ENCODE measurements at regions of chr1 and their contacts with region 1.

Region 1: GRCh38 chr1:95233737-95234500 is at the start of gene RWDD3:
- DNase-seq: peak; percentile 53
- ATAC-seq: peak; percentile 98
- H3K4me3 ChIP-seq: peak within 1 kb of the TSS; percentile 79
- H3K27ac ChIP-seq: peak within 1 kb of the TSS; percentile 63
- H3K4me1 ChIP-seq: peaks cover 4% of the 10 kb centered on the region; the same call in 1 of the 2 replicates
- H3K27me3 ChIP-seq: peaks cover 0 to 3% of the 10 kb centered on the region in 2 experiments; a peak in 2 of 4 replicates
- CTCF ChIP-seq: peak; percentile 65 to 90 (median 72); a peak in 5 of 6 replicates
- EP300 ChIP-seq: no peak
- POLR2A ChIP-seq: peak; percentile 96
- RAD21 ChIP-seq: peak; percentile 88
- polyA plus RNA-seq, gene RWDD3: 41.1 to 42.9 TPM

Region 2: DNA sequence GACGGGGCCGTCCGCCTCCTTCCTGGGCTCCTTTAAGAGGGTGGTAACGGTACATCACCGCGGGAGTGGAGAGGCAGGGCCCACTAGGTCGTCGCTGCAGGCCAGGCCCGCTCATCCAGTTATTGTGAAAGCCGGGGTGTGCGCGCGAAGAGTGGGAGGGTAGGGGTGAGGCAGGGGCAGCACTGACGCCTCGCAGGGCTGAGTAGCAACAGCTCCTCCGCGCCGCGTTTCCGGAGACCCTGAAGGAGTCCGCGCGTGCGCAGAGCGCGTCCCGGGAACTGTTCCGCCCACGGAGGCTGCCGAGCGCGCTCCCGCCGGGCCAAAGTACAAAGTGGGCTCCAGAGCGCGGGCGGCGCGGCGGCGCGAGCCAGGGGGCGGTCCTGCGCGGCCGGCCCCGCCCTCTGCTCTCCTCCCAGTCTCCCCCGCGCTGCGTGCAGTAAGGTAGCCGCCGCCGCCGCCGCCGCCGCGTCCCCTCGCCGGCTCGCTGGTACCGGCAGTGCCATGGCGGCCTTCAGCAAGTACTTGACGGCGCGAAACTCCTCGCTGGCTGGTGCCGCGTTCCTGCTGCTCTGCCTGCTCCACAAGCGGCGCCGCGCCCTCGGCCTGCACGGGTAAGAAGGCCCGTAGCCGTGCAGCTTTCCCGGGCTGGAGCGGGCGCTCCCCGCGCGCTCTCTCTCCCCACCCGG is 815.8 kb before region 1 on chr1 and contains the start of gene ABCD3:
- CTCF ChIA-PET with region 1: no interaction called
- POLR2A ChIA-PET with region 1: no interaction called
- RAD21 ChIA-PET with region 1: no interaction called
- SMC1A ChIA-PET with region 1: no interaction called
- in situ Hi-C with region 1: no loop called
- intact Hi-C with region 1: loop called (anchors 10 kb)
- DNase-seq: peak; percentile 80
- ATAC-seq: peak; percentile 96
- H3K4me3 ChIP-seq: peak within 1 kb of the TSS; percentile 78
- H3K27ac ChIP-seq: peak within 1 kb of the TSS; percentile 43
- H3K4me1 ChIP-seq: no peaks in the 10 kb centered on the region
- H3K27me3 ChIP-seq: no peaks in the 10 kb centered on the region
- CTCF ChIP-seq: no peak
- EP300 ChIP-seq: 0 out of 4 replicates have a peak, but pooled peaks have one; percentile 9 to 11
- POLR2A ChIP-seq: peak; percentile 94
- RAD21 ChIP-seq: no peak
- polyA plus RNA-seq, gene ABCD3: 15.1 to 16.3 TPM

Region 3: DNA sequence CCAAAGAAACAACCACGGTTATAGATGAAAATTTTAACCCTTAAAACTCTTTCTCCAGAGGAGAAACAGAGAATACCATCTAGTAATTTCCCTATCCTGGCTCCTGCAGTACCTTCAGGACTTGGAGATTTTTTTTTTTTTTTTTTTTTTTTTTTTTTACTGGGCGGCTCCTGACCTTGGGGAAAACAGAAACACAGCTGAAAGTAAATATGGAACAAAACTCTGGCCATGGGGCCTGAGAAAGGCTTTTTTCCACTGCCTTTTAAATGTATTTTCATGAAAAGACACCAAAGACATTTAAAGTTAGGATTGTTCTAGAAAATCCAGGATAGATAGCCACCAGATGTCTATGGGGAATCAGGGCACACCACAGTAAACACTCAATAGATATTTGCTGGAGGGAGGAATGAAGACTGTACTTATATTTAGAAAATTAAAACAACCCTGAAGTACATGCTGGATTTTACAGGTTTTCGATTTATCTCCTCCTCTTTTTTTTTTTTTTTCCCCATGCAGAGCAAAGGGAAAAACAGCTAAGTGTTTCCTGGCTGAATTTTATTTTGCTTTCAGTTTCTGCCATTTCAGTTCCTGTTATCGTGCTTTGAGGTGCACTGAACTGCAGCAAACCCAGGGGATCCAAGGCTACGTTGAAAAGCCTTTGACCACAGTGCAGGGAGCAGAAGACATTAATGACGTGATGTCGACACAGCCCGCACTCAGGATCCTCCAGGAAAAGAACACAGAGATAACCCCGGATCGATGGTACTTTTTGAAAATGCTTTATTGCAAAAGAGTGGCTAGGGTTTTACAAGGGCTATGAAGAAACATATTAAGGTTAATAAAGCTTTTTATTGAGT is 271.3 kb before region 1 on chr1:
- CTCF ChIA-PET with region 1: no interaction called
- POLR2A ChIA-PET with region 1: no interaction called
- RAD21 ChIA-PET with region 1: no interaction called
- SMC1A ChIA-PET with region 1: interaction called, 3 read pairs
- in situ Hi-C with region 1: no loop called
- intact Hi-C with region 1: loop called (anchors 10 kb)
- DNase-seq: peak; percentile 64
- ATAC-seq: peak; percentile 96
- H3K4me3 ChIP-seq: no peak overlapping the region; the same call in 1 of the 2 replicates
- H3K27ac ChIP-seq: peak overlapping the region; percentile 70
- H3K4me1 ChIP-seq: no peaks in the 10 kb centered on the region; the same call in 1 of the 2 replicates
- H3K27me3 ChIP-seq: no peaks in the 10 kb centered on the region
- CTCF ChIP-seq: no peak
- EP300 ChIP-seq: 0 out of 4 replicates have a peak, but pooled peaks of 1 of the 2 experiments have one; percentile 44
- POLR2A ChIP-seq: no peak
- RAD21 ChIP-seq: no peak

Region 4: DNA sequence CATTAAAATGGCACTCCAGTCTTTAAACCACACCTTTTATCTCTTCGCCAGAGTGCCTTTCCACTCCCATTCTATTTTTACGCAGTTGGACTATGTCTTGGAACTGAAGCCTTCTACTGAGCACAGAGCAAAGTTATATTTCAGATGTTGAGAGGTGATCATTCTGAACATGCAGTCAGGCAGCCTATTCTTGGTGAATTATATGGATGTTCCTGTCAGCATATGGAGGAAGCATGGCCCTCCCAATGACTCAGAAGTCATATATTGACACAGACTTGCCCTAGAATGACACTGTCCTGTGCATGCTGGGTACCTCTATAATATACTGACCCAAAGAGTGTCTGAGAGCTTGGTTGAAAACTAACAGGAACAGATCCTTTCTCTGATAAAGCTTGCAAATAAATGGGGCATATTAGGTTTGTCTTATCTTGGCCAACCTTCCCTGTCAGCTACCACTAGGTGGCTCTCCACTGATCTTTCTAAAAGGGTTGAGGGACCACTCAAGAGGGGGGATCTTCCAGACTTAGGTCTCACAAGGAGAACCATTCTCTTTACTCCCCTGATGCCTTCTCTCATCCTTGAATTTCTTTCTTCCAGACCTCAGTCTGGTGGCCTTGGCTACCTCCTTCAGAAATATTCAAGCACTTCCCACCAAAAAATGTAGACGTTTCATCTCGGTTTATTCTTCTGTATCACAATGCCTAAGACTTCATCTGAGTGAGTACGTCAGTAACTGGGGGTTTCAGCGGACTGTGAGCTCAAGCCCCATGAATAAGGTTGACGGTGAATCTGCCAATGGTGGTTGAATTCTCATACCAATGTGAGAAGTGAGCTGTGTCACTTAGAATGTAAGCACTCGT is 149.4 kb before region 1 on chr1:
- CTCF ChIA-PET with region 1: interaction called, 42 read pairs
- POLR2A ChIA-PET with region 1: no interaction called
- RAD21 ChIA-PET with region 1: interaction called, 32 read pairs
- SMC1A ChIA-PET with region 1: interaction called, 14 read pairs
- in situ Hi-C with region 1: loop called (anchors 5 kb)
- intact Hi-C with region 1: loop called (anchors 1 kb)
- DNase-seq: no peak
- ATAC-seq: peak; percentile 90
- H3K4me3 ChIP-seq: no peak overlapping the region
- H3K27ac ChIP-seq: no peak overlapping the region
- H3K4me1 ChIP-seq: no peaks in the 10 kb centered on the region
- H3K27me3 ChIP-seq: peaks cover 0 to 2% of the 10 kb centered on the region in 2 experiments; a peak in 1 of 4 replicates
- CTCF ChIP-seq: peak; percentile 63 to 80 (median 78)
- EP300 ChIP-seq: no peak
- POLR2A ChIP-seq: no peak
- RAD21 ChIP-seq: peak; percentile 65

Region 5: GRCh38 chr1:95246511-95246910 is 12.6 kb after region 1 on chr1:
- CTCF ChIA-PET with region 1: interaction called, 24 read pairs
- POLR2A ChIA-PET with region 1: interaction called, 4 read pairs
- RAD21 ChIA-PET with region 1: interaction called, 23 read pairs
- SMC1A ChIA-PET with region 1: interaction called, 12 read pairs
- in situ Hi-C with region 1: no loop called
- intact Hi-C with region 1: no loop called
- DNase-seq: no peak
- ATAC-seq: no peak
- H3K4me3 ChIP-seq: no peak overlapping the region
- H3K27ac ChIP-seq: no peak overlapping the region
- H3K4me1 ChIP-seq: no peaks in the 10 kb centered on the region
- H3K27me3 ChIP-seq: no peaks in the 10 kb centered on the region
- CTCF ChIP-seq: no peak
- EP300 ChIP-seq: no peak
- POLR2A ChIP-seq: no peak
- RAD21 ChIP-seq: no peak

Region 6: DNA sequence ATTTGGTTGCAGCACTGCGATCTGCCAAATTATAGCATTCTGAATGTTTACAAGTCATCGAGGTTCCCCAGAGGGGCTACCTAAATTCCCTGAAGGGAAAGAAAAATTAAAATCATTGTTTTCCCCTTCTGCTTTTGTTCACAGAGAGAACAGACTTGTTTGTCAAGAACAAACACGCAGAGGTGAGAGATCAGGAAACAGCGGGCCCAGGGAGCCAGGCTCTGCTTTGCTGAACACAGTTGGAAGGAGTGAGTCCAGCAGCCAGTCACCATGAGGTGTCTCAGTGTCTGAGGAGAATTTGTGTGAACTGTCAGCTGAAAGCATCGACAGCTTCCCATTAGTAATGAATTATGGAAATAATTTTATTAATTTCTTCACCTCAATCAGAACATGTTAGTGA is 52.6 kb after region 1 on chr1:
- CTCF ChIA-PET with region 1: no interaction called
- POLR2A ChIA-PET with region 1: no interaction called
- RAD21 ChIA-PET with region 1: no interaction called
- SMC1A ChIA-PET with region 1: no interaction called
- in situ Hi-C with region 1: no loop called
- intact Hi-C with region 1: no loop called
- DNase-seq: no peak
- ATAC-seq: no peak
- H3K4me3 ChIP-seq: no peak overlapping the region
- H3K27ac ChIP-seq: no peak overlapping the region
- H3K4me1 ChIP-seq: no peaks in the 10 kb centered on the region
- H3K27me3 ChIP-seq: no peaks in the 10 kb centered on the region
- CTCF ChIP-seq: no peak
- EP300 ChIP-seq: no peak
- POLR2A ChIP-seq: no peak
- RAD21 ChIP-seq: no peak